Activated CD8-positive, alpha-beta memory T cell treated with anti-CD3 and anti-CD28 coated beads, Interleukin-2, amount 10 ng/mL, durations not matched to agents 7 days and 5 days (primary cell): ENCODE measurements at regions of chr4 and their contacts with region 1.

Region 1: DNA sequence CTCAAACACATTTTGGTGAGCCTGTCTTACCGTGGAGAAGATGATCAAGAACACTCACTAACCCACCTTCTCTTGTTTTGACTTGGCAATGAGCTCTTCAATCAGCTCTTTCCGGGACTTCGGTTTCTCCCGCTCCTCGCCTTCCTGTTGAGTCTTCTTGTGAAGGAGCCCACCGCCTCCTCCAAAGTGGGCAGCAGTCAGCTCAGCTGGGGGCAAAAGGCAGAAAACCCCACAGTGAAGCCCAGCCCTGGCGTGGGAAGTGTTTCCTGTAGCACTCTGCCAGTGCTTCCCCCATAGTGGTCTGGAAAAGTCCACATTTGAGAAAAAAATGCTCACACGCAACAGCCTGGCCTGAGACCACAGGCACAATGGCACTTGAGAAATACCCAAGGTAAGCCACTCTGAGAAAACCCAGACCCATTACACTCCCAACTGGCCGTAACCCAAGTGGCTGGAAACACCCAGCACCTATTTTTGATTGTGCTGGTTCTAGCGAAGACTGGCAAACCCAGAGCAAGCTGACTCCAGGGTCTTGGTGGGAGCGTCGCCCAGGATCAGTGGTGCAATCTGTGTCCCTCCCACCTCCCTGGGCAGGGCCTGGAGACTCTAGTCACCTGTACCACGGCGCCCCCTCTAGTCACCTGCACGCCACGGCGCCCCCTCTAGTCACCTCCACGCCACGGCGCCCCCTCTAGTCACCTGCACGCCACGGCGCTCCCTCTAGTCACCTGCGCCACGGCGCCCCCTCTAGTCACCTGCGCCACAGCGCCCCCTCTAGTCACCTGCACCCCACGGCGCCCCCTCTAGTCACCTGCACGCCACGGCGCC is 8.6 kb downstream of the NOP14 start:
- DNase-seq: peak; percentile 86
- ATAC-seq: peak; percentile 77
- H3K4me3 Mint-ChIP-seq: peak overlapping the region; percentile 40
- H3K27ac Mint-ChIP-seq: peak overlapping the region; percentile 90
- H3K4me1 Mint-ChIP-seq: peaks cover 73% of the 10 kb centered on the region
- H3K27me3 Mint-ChIP-seq: no peaks in the 10 kb centered on the region

Region 2: GRCh38 chr4:2714061-2714770 is 240.4 kb before region 1 on chr4:
- CTCF ChIA-PET with region 1: no interaction called
- DNase-seq: peak; percentile 50
- ATAC-seq: peak; percentile 72
- H3K4me3 Mint-ChIP-seq: no peak overlapping the region
- H3K27ac Mint-ChIP-seq: peak overlapping the region; percentile 63
- H3K4me1 Mint-ChIP-seq: peaks cover 24% of the 10 kb centered on the region
- H3K27me3 Mint-ChIP-seq: no peaks in the 10 kb centered on the region

Region 3: DNA sequence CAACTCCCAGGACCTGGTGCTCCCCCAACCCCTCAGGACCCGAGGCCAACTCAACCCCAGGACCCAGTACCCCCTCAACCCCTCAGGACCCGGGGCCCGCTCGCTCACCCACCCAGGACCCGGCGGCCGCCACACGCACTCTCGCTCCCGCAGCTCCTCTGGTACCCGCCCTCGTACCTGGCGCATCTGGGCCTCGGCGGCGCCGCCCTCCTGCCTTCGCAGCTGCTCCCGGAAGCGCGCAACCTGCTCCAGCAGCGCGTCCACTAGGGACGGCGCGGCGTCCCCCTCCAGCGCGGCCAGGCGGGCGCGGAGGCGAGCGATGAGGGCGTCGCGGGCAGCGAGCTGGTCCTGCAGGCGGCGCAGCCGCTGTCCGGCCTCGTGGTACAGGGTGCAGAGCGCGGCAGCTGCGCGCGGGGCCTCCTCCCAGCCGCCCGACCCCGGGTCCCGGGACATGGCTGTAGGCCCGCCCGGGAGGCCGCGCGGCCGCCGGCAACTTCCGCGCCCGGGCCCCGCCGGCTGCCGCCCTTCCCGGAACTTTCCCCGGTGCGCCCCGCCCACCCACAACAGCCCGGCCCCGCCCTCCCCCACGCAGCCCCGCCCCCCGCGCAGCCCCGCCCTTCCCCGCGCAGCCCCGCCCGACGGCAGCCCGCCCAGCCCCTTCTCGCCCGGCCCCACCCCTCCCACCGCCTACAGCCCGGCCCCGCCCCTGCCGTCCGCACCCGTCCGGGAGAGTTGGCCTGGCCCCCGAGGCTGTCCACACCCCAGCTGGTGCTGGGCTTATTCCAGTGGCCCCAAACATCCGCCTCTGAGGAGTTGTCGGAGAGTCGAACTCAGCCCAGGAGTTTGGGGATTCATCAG is 198.5 kb before region 1 on chr4 and contains the start of gene TNIP2:
- CTCF ChIA-PET with region 1: interaction called, 19 read pairs
- DNase-seq: peak; percentile 82
- ATAC-seq: peak; percentile 86
- H3K4me3 Mint-ChIP-seq: peak within 1 kb of the TSS; percentile 78
- H3K27ac Mint-ChIP-seq: peak within 1 kb of the TSS; percentile 36
- H3K4me1 Mint-ChIP-seq: peaks cover 29% of the 10 kb centered on the region
- H3K27me3 Mint-ChIP-seq: no peaks in the 10 kb centered on the region
- total RNA-seq, gene TNIP2: 51.3 to 53.5 TPM

Region 4: DNA sequence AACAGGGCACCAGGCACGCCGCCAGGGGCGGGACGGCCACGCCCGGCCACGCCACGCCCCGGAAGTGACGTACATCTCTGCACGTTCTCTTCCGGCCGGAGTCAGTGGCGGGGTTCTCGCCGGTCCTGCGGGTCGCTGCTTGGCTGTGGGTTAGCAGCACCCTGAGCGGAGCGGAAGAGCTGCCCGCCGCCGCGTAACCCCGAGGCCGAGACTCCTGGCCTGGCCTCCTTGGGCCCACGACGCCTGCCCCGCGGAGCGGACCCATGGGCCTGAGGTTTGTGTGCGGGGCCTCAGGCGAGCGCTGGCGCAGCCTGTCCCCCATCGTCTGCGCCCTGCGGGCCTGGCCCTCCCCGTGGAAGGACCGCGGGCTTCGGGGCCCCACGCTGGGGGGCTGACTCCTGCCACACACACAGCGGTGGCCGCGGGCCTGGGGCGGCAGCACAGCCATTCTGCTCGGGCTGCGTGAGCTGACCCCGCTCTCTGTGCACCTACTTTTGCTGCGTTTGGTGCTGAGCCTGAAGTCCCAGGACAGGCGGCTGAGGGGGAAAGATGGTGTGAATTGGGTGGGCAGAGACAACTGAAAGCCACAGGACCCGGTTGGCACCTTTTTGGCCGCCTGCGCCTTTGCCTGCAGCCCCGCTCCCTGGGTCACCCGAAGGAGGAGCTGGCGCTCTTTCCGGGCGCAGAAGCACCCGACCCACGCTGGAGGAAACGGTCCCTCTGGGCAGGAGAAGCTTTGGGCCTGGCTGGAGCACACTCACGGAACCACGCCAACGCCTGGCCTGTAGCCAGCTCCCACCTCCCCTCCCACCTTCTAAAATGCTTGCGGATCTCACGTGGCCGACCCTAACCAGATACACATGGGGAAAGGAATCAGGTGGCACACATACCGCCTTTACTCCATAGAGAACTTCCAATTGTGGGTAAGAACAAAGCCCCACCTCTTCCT is 19.5 kb before region 1 on chr4:
- CTCF ChIA-PET with region 1: interaction called, 65 read pairs
- DNase-seq: peak; percentile 96
- ATAC-seq: peak; percentile 58
- H3K4me3 Mint-ChIP-seq: peak overlapping the region; percentile 85
- H3K27ac Mint-ChIP-seq: peak overlapping the region; percentile 90
- H3K4me1 Mint-ChIP-seq: peaks cover 68% of the 10 kb centered on the region
- H3K27me3 Mint-ChIP-seq: no peaks in the 10 kb centered on the region

Region 5: GRCh38 chr4:2942532-2943320 is 11.8 kb before region 1 on chr4:
- CTCF ChIA-PET with region 1: interaction called, 65 read pairs
- DNase-seq: peak; percentile 74
- ATAC-seq: peak; percentile 73
- H3K4me3 Mint-ChIP-seq: peak overlapping the region; percentile 47
- H3K27ac Mint-ChIP-seq: peak overlapping the region; percentile 93
- H3K4me1 Mint-ChIP-seq: peaks cover 62% of the 10 kb centered on the region
- H3K27me3 Mint-ChIP-seq: no peaks in the 10 kb centered on the region